ENCODE measurements at regions of chr4 and their contacts with region 1.

Region 1: DNA sequence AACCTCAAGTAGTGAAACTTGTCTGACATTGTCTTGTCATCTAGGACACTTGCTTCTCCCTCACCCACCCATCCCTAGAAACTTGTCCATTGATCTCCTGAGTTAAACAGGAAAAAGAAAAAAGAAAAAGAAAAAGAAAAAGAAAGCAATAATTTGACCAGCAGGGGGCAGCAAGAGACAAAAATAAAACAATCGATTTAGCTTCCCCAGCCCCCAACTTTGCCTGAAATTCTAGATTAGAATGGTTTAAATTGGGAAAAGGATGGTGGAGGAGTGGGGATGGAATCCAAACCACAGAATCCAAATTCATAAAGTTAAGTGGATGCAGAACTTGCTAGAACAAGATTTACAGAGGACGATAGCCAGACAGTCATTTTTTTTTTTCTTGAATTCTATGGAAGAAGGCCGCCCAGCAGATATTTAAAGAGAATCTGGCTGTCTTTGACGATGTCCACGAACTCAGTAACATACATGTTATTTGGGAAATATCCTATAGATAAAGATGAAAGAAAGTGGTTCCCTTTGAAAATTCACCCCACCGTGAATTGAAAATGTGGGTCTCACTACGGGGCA is 282.9 kb downstream of the USP46 start:
- DNase-seq: no peak
- H3K4me3 ChIP-seq: no peak overlapping the region
- H3K27ac ChIP-seq: no peak overlapping the region
- H3K4me1 ChIP-seq: no peaks in the 10 kb centered on the region
- H3K27me3 ChIP-seq: no peaks in the 10 kb centered on the region
- CTCF ChIP-seq: peak; percentile 57 to 73 (median 62)
- EP300 ChIP-seq: no peak
- POLR2A ChIP-seq: no peak

Region 2: GRCh38 chr4:52001616-52002015 is 374.6 kb before region 1 on chr4:
- in situ Hi-C with region 1: no loop called
- intact Hi-C with region 1: no loop called
- DNase-seq: no peak
- H3K4me3 ChIP-seq: no peak overlapping the region
- H3K27ac ChIP-seq: no peak overlapping the region
- H3K4me1 ChIP-seq: no peaks in the 10 kb centered on the region
- H3K27me3 ChIP-seq: no peaks in the 10 kb centered on the region
- CTCF ChIP-seq: no peak
- EP300 ChIP-seq: no peak
- POLR2A ChIP-seq: no peak

Region 3: GRCh38 chr4:54255876-54256275 is 1879.7 kb after region 1 on chr4:
- in situ Hi-C with region 1: loop called in 1 of 4 experiments (anchors 25 kb)
- intact Hi-C with region 1: no loop called
- DNase-seq: no peak
- H3K4me3 ChIP-seq: no peak overlapping the region
- H3K27ac ChIP-seq: peak overlapping the region in 1 of 4 donors; percentile 17
- H3K4me1 ChIP-seq: no peaks in the 10 kb centered on the region
- H3K27me3 ChIP-seq: no peaks in the 10 kb centered on the region
- CTCF ChIP-seq: no peak
- EP300 ChIP-seq: no peak
- POLR2A ChIP-seq: no peak